ENCODE measurements at regions of chr19 and their contacts with region 1.

Region 1: DNA sequence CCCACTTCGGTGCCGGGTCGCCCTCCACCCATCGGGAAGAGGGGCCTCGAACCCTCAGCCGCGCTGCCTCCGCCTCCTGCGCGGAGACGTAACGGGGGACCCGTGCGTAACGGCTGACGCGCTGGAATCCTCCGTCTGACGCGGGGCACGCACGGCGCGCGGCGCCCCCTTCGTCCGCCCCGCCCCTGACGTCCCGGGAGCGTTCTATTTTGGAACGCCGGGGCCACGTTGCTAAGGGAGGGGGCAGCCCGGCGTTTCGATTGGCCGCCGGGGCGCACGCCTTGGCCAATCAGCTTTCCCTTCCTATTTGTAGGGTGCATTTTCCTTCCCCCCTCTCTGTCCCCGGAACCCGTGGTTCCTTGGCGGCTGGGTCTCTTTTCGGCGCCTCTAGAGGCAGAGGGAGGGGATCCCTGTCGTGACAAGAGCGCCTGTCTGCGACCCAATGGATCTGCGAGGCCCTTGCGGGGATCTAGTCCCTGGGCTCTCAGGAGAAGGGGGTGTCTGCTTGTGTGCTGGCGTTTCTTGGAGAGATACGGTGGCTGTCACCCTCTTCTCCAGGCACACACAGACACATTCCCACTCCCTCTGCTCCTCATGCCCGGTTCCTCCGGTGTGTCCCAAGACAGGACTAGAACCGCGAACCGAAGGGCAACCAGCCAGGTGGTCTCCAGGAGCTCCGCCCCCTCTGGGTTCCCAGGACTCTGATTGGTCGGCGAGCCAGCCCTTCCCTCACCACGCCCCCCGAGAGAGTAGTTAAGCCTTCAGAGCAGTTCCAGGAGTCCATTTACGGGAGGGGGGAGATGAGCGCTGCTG is 1.5 kb downstream of the FOSB start:
- DNase-seq: peak; percentile 81 to 89 (median 87)
- H3K4me3 ChIP-seq: peak overlapping the region; percentile 72 to 100 (median 97)
- H3K27ac ChIP-seq: peak overlapping the region; percentile 88 to 97
- H3K4me1 ChIP-seq: peaks cover 0 to 34% (median 33%) of the 10 kb centered on the region in 4 experiments
- H3K27me3 ChIP-seq: peaks cover 0 to 53% (median 21%) of the 10 kb centered on the region in 5 experiments

Region 2: GRCh38 chr19:45439569-45440254 is 29.6 kb before region 1 on chr19:
- CTCF ChIA-PET with region 1: interaction called, 289 read pairs
- POLR2A ChIA-PET with region 1: interaction called, 54 read pairs
- DNase-seq: peak; percentile 75 to 87 (median 86)
- H3K4me3 ChIP-seq: peak overlapping the region; percentile 50 to 77 (median 66)
- H3K27ac ChIP-seq: peak overlapping the region in 1 of 2 experiments; percentile 43
- H3K4me1 ChIP-seq: peaks cover 0 to 33% (median 26%) of the 10 kb centered on the region in 4 experiments
- H3K27me3 ChIP-seq: peaks cover 0 to 12% (median 0%) of the 10 kb centered on the region in 5 experiments

Region 3: DNA sequence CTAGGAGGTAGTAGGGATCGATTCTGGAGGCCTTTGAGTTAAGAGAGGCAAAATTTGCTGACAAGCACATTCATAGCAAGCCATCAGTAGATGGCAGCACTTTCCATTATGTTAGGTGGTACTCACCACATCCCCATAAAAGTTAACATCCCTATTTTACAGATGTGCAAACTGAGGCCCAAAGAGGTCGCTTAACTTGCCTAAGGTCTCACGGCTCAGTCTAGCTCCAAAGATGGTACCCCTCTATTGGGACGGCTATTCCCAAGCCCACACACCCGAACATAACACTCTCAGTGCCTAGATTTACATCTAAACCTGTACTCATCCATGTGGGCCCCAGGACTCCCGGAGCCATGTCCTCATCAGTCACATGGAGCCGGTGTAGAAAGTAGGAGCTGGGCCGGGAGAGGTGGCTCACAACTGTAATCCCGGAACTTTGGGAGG is 23.0 kb before region 1 on chr19:
- CTCF ChIA-PET with region 1: interaction called, 289 read pairs
- POLR2A ChIA-PET with region 1: interaction called, 54 read pairs
- DNase-seq: peak; percentile 74 to 81 (median 79)
- H3K4me3 ChIP-seq: no peak overlapping the region
- H3K27ac ChIP-seq: no peak overlapping the region
- H3K4me1 ChIP-seq: peaks cover 4 to 49% (median 44%) of the 10 kb centered on the region in 4 experiments
- H3K27me3 ChIP-seq: peaks cover 0 to 12% (median 2%) of the 10 kb centered on the region in 5 experiments

Region 4: DNA sequence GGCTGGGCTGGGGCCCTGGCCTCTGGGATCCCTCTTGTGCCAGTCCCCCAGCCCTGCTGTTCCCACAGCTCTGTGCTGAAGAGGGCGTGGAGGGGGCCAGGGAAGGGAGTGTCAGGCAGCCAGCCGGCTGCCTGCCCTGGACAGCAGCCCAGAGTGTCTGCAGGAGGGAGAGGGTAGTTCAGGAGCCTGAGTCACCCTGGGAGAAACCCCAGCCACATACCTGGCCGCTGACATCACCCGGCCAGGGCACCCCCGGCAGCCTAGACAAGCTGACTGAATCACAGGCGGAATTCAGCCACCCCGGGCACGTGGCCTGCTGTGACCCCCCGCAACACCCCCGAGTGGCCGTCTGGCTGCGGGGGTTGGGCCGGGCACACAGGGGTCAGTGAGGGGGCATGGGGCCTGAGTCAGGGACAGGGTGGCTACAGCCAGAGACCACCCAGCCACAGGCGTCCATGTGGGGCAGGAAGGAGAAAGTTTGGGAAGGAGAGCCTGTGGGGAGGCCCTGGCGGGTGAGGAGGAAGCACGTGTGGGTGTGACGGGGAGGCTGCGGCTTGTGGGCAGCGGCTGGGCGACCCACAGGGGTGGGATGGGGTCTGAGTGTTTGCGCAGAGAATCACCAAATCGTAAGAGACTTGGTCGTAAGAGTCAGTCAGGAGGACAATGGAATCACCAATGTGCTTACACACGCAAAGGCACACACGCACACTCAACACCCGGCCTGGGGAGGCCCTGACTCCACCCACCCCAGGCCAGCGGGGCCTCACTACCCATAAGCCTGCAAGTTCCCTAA is 13.4 kb before region 1 on chr19:
- CTCF ChIA-PET with region 1: interaction called, 15 read pairs
- POLR2A ChIA-PET with region 1: interaction called, 41 read pairs
- DNase-seq: peak; percentile 95 to 98 (median 96)
- H3K4me3 ChIP-seq: peak overlapping the region in 4 of 7 experiments; percentile 26 to 68 (median 54)
- H3K27ac ChIP-seq: peak overlapping the region; percentile 61 to 86
- H3K4me1 ChIP-seq: peaks cover 0 to 37% (median 31%) of the 10 kb centered on the region in 4 experiments
- H3K27me3 ChIP-seq: peaks cover 0 to 2% (median 0%) of the 10 kb centered on the region in 5 experiments